PC-3 (cell line): ENCODE measurements at regions of chr12 and their contacts with region 1.

Region 1: GRCh38 chr12:84507956-84508850 is 404.4 kb downstream of the SLC6A15 start:
- DNase-seq: peak; percentile 86
- ATAC-seq: peak; percentile 89
- H3K4me3 ChIP-seq: no peak overlapping the region
- H3K27ac ChIP-seq: peak overlapping the region; percentile 23
- H3K4me1 ChIP-seq: peaks cover 25% of the 10 kb centered on the region
- H3K27me3 ChIP-seq: no peaks in the 10 kb centered on the region
- CTCF ChIP-seq: peak; percentile 68

Region 2: DNA sequence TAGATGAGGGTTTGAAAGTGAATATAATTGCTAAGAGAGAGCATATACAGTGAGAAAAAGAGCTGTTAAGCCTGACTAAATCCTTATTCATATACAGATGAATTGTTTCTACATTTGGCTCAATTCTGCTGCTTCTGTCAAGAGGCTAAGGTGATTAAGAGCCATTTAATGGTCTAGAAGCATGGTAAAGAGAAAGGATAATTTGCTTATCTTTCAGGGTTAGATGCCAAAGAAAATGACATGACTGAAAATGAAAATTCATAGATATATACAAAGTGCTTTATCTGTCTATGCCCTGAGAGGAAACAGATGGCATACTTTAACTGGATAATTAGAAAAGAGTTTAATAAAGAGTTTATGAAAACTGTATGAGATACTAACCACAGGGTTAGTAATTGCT is 430.5 kb before region 1 on chr12:
- CTCF ChIA-PET with region 1: no interaction called
- POLR2A ChIA-PET with region 1: no interaction called
- intact Hi-C with region 1: no loop called
- DNase-seq: no peak
- ATAC-seq: no peak
- H3K4me3 ChIP-seq: no peak overlapping the region
- H3K27ac ChIP-seq: no peak overlapping the region
- H3K4me1 ChIP-seq: peaks cover 8% of the 10 kb centered on the region; the same call in 1 of the 2 replicates
- H3K27me3 ChIP-seq: no peaks in the 10 kb centered on the region
- CTCF ChIP-seq: no peak

Region 3: GRCh38 chr12:84585776-84586395 is 77.7 kb after region 1 on chr12:
- CTCF ChIA-PET with region 1: no interaction called
- POLR2A ChIA-PET with region 1: no interaction called
- intact Hi-C with region 1: loop called (anchors 5 kb)
- DNase-seq: peak; percentile 85
- ATAC-seq: peak; percentile 95
- H3K4me3 ChIP-seq: peak overlapping the region; percentile 20; the same call in 1 of the 2 replicates
- H3K27ac ChIP-seq: peak overlapping the region; percentile 18; the same call in 1 of the 2 replicates
- H3K4me1 ChIP-seq: peaks cover 12% of the 10 kb centered on the region
- H3K27me3 ChIP-seq: no peaks in the 10 kb centered on the region
- CTCF ChIP-seq: no peak

Region 4: GRCh38 chr12:84619113-84619512 is 110.9 kb after region 1 on chr12:
- CTCF ChIA-PET with region 1: no interaction called
- POLR2A ChIA-PET with region 1: no interaction called
- intact Hi-C with region 1: loop called (anchors 2 kb)
- DNase-seq: peak; percentile 37
- ATAC-seq: 0 out of 2 replicates have a peak, but pooled peaks have one; percentile 27
- H3K4me3 ChIP-seq: no peak overlapping the region
- H3K27ac ChIP-seq: no peak overlapping the region
- H3K4me1 ChIP-seq: no peaks in the 10 kb centered on the region
- H3K27me3 ChIP-seq: no peaks in the 10 kb centered on the region
- CTCF ChIP-seq: peak; percentile 77